ENCODE measurements at regions of chr2 and their contacts with region 1.

Region 1: DNA sequence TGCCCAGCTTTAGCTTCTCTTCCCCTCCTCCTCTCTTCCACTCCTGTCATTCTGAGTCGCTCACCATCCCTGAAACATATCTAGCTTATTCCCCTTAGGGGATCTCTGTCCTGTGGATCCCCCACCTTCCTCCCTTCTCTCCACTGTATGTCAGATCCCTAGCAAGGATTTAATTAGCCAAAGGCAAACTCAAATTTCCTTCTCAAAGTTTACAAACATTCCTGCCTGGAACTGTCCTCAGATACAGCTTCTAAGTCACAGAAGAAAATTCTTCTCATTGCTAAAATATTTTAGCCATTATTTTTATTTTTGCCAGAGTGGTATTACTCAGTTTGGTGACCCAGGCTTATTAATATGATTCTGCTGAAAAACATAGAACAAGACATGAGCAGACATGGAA is 315.3 kb downstream of the CYP26B1 start:
- DNase-seq: no peak
- ATAC-seq: no peak
- H3K4me3 ChIP-seq: no peak overlapping the region
- H3K27ac ChIP-seq: no peak overlapping the region
- H3K4me1 ChIP-seq: peaks cover 0 to 4% of the 10 kb centered on the region in 2 donors
- H3K27me3 ChIP-seq: no peaks in the 10 kb centered on the region

Region 2: GRCh38 chr2:71646028-71646427 is 186.4 kb before region 1 on chr2:
- intact Hi-C with region 1: no loop called
- DNase-seq: peak; percentile 85 to 89
- ATAC-seq: peak; percentile 60
- H3K4me3 ChIP-seq: no peak overlapping the region
- H3K27ac ChIP-seq: peak overlapping the region in 1 of 2 donors; percentile 49
- H3K4me1 ChIP-seq: peaks cover 3% of the 10 kb centered on the region in 2 donors
- H3K27me3 ChIP-seq: no peaks in the 10 kb centered on the region

Region 3: GRCh38 chr2:71846669-71847291 is 14.4 kb after region 1 on chr2:
- intact Hi-C with region 1: loop called in 1 of 2 experiments (anchors 1 kb)
- DNase-seq: no peak
- ATAC-seq: no peak
- H3K4me3 ChIP-seq: no peak overlapping the region
- H3K27ac ChIP-seq: no peak overlapping the region
- H3K4me1 ChIP-seq: peaks cover 3 to 5% of the 10 kb centered on the region in 2 donors
- H3K27me3 ChIP-seq: no peaks in the 10 kb centered on the region

Measured in aorta (tissue), 5 donors.